ENCODE measurements at regions of chr10 and their contacts with region 1.

Region 1: DNA sequence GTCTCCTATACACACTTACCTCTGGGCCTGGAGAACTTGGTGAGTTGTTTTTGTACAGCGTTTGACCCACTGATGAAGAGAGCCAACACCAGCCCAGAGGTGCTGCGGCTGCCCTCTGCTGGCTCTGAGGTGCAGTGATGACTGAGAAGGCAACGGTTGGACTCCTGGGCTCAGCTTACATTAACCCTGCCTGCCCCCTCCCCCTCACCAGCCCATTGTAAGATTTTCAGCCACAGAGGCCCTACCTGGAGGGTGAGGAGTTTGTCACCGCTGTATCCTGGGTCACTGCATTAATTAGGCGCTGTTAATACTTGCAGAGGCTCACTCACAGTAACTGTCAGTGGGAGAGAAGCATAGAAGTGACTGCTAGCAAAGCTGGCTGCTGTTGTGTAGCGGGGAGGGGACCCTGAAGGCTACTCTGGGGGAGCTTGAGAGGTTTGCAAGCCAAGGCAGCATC is 19.0 kb upstream of the ANKRD2 start:
- DNase-seq: peak; percentile 68 to 82
- H3K4me3 ChIP-seq: no peak overlapping the region
- H3K27ac ChIP-seq: no peak overlapping the region
- H3K4me1 ChIP-seq: peaks cover 0 to 13% (median 4%) of the 10 kb centered on the region in 4 donors
- H3K27me3 ChIP-seq: no peaks in the 10 kb centered on the region
- CTCF ChIP-seq: peak in 5 of 7 experiments; percentile 60 to 71 (median 63)
- EP300 ChIP-seq: no peak
- POLR2A ChIP-seq: no peak

Region 2: GRCh38 chr10:97353945-97354344 is 199.7 kb before region 1 on chr10:
- intact Hi-C with region 1: no loop called
- DNase-seq: no peak
- H3K4me3 ChIP-seq: no peak overlapping the region
- H3K27ac ChIP-seq: peak overlapping the region in 2 of 5 donors; percentile 52 to 56
- H3K4me1 ChIP-seq: peaks cover 0 to 31% (median 15%) of the 10 kb centered on the region in 4 donors
- H3K27me3 ChIP-seq: no peaks in the 10 kb centered on the region
- CTCF ChIP-seq: no peak
- EP300 ChIP-seq: no peak
- POLR2A ChIP-seq: no peak

Region 3: DNA sequence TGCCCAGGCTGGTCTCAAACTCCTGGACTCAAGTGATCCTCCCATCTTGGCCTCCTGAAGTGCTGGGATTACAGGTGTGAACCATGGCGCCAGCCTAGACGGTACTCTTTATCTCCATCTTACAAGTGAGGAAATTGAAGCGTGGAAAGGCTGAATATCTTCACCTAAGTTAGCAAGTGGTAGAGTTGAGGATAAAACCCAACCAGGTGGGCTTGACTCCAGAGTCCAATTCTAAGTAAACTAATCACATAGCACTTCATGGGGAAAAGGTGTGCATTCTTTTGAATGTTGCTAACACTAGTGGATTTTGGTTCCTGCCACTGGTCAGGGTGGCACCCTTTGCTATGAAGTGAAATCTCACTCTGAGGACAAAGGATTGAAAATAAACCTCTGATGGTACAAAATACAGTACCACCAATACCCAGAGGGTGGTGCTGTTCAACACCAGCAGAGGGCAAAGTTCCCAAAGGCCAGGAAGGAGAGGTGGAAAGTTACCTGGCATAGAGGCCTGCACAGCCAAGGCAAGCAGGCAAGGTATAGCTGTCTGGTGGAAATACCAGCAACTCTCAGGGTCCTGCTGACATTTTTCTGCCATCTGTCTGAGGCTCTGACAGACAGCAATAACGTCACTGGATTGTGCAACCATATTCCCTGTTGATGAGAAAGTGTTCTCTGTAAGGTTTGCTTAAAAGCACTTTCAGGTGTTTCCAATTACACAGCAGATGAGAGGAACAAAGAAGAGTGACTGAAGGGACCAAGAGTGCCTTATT is 90.1 kb before region 1 on chr10:
- intact Hi-C with region 1: loop called (anchors 10 kb)
- DNase-seq: peak; percentile 59 to 80
- H3K4me3 ChIP-seq: no peak overlapping the region
- H3K27ac ChIP-seq: peak overlapping the region in 4 of 5 donors; percentile 4 to 39 (median 34)
- H3K4me1 ChIP-seq: peaks cover 0 to 10% (median 6%) of the 10 kb centered on the region in 4 donors
- H3K27me3 ChIP-seq: no peaks in the 10 kb centered on the region
- CTCF ChIP-seq: peak in 5 of 7 experiments; percentile 52 to 88 (median 76)
- EP300 ChIP-seq: no peak
- POLR2A ChIP-seq: no peak

Region 4: GRCh38 chr10:97659589-97659988 is 106.0 kb after region 1 on chr10:
- intact Hi-C with region 1: no loop called
- DNase-seq: peak in 1 of 2 donors; percentile 53
- H3K4me3 ChIP-seq: no peak overlapping the region
- H3K27ac ChIP-seq: no peak overlapping the region
- H3K4me1 ChIP-seq: peaks cover 0 to 2% (median under 1%) of the 10 kb centered on the region in 4 donors
- H3K27me3 ChIP-seq: no peaks in the 10 kb centered on the region
- CTCF ChIP-seq: no peak
- EP300 ChIP-seq: no peak
- POLR2A ChIP-seq: no peak

Region 5: GRCh38 chr10:97686962-97687784 is 133.6 kb after region 1 on chr10 and contains the start of gene AVPI1:
- intact Hi-C with region 1: no loop called
- DNase-seq: peak; percentile 98 to 99
- H3K4me3 ChIP-seq: peak within 1 kb of the TSS; percentile 57 to 78 (median 68)
- H3K27ac ChIP-seq: peak within 1 kb of the TSS; percentile 89 to 97 (median 93)
- H3K4me1 ChIP-seq: peaks cover 37 to 71% (median 59%) of the 10 kb centered on the region in 4 donors
- H3K27me3 ChIP-seq: no peaks in the 10 kb centered on the region
- CTCF ChIP-seq: no peak
- EP300 ChIP-seq: peak; percentile 93
- POLR2A ChIP-seq: peak in 2 of 4 donors; percentile 96 to 97
- total RNA-seq, gene AVPI1: 2.3 to 24.6 (median 12.1) TPM